OCI-LY7 (cell line): ENCODE measurements at regions of chr10 and their contacts with region 1.

Region 1: GRCh38 chr10:11270135-11270857 is 252.6 kb downstream of the CELF2 start:
- DNase-seq: peak; percentile 82
- H3K4me3 ChIP-seq: no peak overlapping the region
- H3K27ac ChIP-seq: no peak overlapping the region
- H3K4me1 ChIP-seq: peaks cover 16% of the 10 kb centered on the region
- CTCF ChIP-seq: peak; percentile 98

Region 2: DNA sequence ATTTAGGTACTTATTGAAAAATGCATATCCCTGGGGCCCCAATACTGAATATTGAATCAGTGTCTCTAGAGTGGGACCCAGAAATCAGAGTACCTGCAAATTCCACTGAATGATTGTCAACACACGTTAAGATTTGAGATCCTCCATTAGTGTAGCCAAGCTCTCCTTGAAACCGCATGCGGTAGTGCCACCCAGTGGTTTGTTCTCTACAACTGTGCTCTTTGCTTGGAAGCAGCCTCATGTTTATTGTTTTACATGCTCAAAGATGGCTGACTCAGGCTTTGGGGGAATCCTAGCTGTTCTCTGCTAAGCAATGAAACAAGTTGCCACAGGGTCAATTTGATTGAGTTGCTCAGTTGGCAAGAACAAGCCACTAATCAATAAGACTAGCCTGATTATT is 592.8 kb before region 1 on chr10:
- CTCF ChIA-PET with region 1: no interaction called
- POLR2A ChIA-PET with region 1: no interaction called
- intact Hi-C with region 1: loop called (anchors 5 kb)
- DNase-seq: peak; percentile 39
- H3K4me3 ChIP-seq: no peak overlapping the region
- H3K27ac ChIP-seq: no peak overlapping the region
- H3K4me1 ChIP-seq: no peaks in the 10 kb centered on the region
- CTCF ChIP-seq: peak; percentile 68

Region 3: GRCh38 chr10:11113156-11113555 is 157.1 kb before region 1 on chr10:
- CTCF ChIA-PET with region 1: no interaction called
- POLR2A ChIA-PET with region 1: interaction called, 3 read pairs
- intact Hi-C with region 1: loop called (anchors 1 kb)
- DNase-seq: peak; percentile 38
- H3K4me3 ChIP-seq: no peak overlapping the region
- H3K27ac ChIP-seq: no peak overlapping the region
- H3K4me1 ChIP-seq: no peaks in the 10 kb centered on the region
- CTCF ChIP-seq: peak; percentile 83

Region 4: GRCh38 chr10:11178606-11179515 is 91.4 kb before region 1 on chr10:
- CTCF ChIA-PET with region 1: no interaction called
- POLR2A ChIA-PET with region 1: interaction called, 4 read pairs
- intact Hi-C with region 1: loop called (anchors 1 kb)
- DNase-seq: peak; percentile 85
- H3K4me3 ChIP-seq: peak overlapping the region; percentile 9
- H3K27ac ChIP-seq: peak overlapping the region; percentile 12
- H3K4me1 ChIP-seq: peaks cover 53% of the 10 kb centered on the region
- CTCF ChIP-seq: no peak

Region 5: GRCh38 chr10:11602919-11603523 is 332.7 kb after region 1 on chr10:
- CTCF ChIA-PET with region 1: no interaction called
- POLR2A ChIA-PET with region 1: no interaction called
- intact Hi-C with region 1: no loop called
- DNase-seq: no peak
- H3K4me3 ChIP-seq: peak overlapping the region; percentile 35
- H3K27ac ChIP-seq: no peak overlapping the region
- H3K4me1 ChIP-seq: peaks cover 86% of the 10 kb centered on the region
- CTCF ChIP-seq: no peak